ENCODE measurements at regions of chr10 and their contacts with region 1.

Region 1: DNA sequence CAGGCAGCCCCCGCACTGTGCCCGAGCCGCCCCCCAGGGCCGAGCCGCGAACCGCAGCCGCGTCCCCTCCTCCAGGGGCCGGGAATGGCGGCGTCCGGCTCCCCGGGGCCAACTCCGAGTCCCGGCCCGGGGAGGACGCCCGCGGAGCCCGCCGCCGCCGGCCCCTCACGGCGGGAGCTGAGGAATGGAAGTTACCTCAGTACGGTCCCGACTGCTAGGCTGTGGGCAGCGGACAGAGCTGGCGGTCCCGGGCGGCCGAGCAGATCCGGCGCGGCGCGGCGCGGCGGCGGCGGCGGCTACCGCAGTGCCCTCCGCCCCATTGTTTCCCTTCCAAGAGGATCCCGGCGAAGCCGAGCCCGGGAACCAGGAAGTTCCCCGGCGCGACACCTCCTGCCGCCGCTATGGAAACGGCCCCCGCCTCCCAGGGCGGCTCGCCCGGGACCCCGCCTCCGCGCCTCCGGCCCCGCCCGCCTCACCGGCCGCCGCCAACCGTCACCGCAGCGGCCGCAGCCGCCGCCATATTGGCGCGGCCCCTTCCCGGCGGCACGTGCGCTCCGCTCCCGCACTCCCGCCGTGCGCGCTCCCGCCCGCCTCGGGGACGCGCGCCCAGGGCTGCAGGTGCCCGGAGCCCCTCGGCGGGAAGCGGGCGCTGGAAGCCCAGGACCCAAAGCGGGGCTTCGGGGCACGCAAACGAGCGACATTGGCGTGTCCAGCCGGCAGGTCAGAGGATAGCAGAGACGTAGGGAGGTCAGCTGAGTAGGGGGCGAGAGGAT is at the start of gene USP6NL:
- DNase-seq: peak; percentile 82
- H3K4me3 ChIP-seq: peak within 1 kb of the TSS; percentile 74 to 92 (median 87)
- H3K27ac ChIP-seq: peak within 1 kb of the TSS; percentile 61
- H3K4me1 ChIP-seq: peaks cover 13% of the 10 kb centered on the region
- H3K27me3 ChIP-seq: no peaks in the 10 kb centered on the region
- CTCF ChIP-seq: no peak
- total RNA-seq, gene USP6NL: 12.2 to 13.9 TPM

Region 2: GRCh38 chr10:11533328-11533781 is 78.1 kb before region 1 on chr10:
- CTCF ChIA-PET with region 1: no interaction called
- dilution Hi-C with region 1: no loop called
- in situ Hi-C with region 1: no loop called
- intact Hi-C with region 1: loop called (anchors 1 kb)
- DNase-seq: peak; percentile 38
- H3K4me3 ChIP-seq: no peak overlapping the region
- H3K27ac ChIP-seq: peak overlapping the region; percentile 56
- H3K4me1 ChIP-seq: peaks cover 21% of the 10 kb centered on the region
- H3K27me3 ChIP-seq: no peaks in the 10 kb centered on the region
- CTCF ChIP-seq: peak; percentile 45 to 55

Region 3: GRCh38 chr10:11551916-11552602 is 59.4 kb before region 1 on chr10:
- CTCF ChIA-PET with region 1: no interaction called
- dilution Hi-C with region 1: no loop called
- in situ Hi-C with region 1: no loop called
- intact Hi-C with region 1: loop called (anchors 2 kb)
- DNase-seq: peak; percentile 95
- H3K4me3 ChIP-seq: peak overlapping the region in 2 of 3 experiments; percentile 3 to 9
- H3K27ac ChIP-seq: peak overlapping the region; percentile 93
- H3K4me1 ChIP-seq: peaks cover 24% of the 10 kb centered on the region
- H3K27me3 ChIP-seq: no peaks in the 10 kb centered on the region
- CTCF ChIP-seq: no peak

Region 4: GRCh38 chr10:11684717-11685645 is 73.5 kb after region 1 on chr10:
- CTCF ChIA-PET with region 1: no interaction called
- dilution Hi-C with region 1: no loop called
- in situ Hi-C with region 1: no loop called
- intact Hi-C with region 1: loop called (anchors 2 kb)
- DNase-seq: peak; percentile 92
- H3K4me3 ChIP-seq: peak overlapping the region; percentile 33 to 44 (median 41)
- H3K27ac ChIP-seq: peak overlapping the region; percentile 72
- H3K4me1 ChIP-seq: peaks cover 31% of the 10 kb centered on the region
- H3K27me3 ChIP-seq: no peaks in the 10 kb centered on the region
- CTCF ChIP-seq: no peak

Region 5: GRCh38 chr10:11757821-11758463 is 146.5 kb after region 1 on chr10:
- CTCF ChIA-PET with region 1: no interaction called
- dilution Hi-C with region 1: no loop called
- in situ Hi-C with region 1: no loop called
- intact Hi-C with region 1: loop called (anchors 5 kb)
- DNase-seq: peak; percentile 91
- H3K4me3 ChIP-seq: no peak overlapping the region
- H3K27ac ChIP-seq: peak overlapping the region; percentile 62
- H3K4me1 ChIP-seq: peaks cover 21% of the 10 kb centered on the region
- H3K27me3 ChIP-seq: no peaks in the 10 kb centered on the region
- CTCF ChIP-seq: peak; percentile 97 to 99